HEK293 (cell line): ENCODE measurements at regions of chr2 and their contacts with region 1.

Region 1: DNA sequence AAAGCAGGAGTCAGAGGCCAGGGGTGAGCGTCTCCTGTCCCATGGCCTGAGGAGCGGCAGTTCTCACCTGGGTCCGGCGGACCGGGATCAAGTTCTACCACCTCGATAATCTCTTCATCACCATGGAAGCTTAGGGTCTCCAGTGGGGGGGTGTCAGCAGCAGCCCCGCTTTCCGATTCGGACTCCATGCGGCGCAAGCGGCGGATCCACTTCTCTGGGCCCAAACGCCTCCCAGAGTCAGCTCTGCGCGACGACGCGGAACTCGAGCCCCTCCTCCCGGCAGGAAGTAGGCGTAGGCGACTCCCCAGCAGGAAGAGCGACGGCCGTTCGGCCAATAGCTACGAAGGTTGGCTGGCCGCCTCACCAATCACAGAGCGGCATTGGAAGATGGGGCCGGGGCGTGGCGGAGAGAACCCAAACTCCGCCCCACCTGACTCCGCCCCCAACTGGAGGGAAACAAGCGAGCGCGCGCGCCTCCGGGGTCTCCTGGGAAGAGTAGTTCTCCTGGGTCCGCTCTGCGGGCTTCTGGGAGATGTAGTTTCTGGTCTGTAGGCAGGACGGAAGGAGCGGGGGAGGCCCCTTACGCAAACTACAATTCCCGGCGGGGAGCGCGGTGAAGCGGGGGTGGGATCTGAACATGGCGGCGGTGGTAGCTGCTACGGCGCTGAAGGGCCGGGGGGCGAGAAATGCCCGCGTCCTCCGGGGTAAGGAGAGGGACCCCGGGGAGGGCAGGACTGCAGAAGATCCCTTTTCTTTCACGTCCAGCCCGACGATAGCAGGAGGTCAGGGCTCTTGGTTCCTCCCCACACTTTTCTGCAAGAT is at the starts of genes AAMP and PNKD:
- H3K4me3 ChIP-seq: peak within 1 kb of the TSS; percentile 76
- H3K27ac ChIP-seq: peak within 1 kb of the TSS; percentile 72
- H3K4me1 ChIP-seq: peaks cover 3% of the 10 kb centered on the region; the same call in 1 of the 2 replicates
- CTCF ChIP-seq: peak; percentile 76

Region 2: GRCh38 chr2:218234521-218234920 is 35.6 kb before region 1 on chr2:
- CTCF ChIA-PET with region 1: no interaction called
- POLR2A ChIA-PET with region 1: no interaction called
- H3K4me3 ChIP-seq: no peak overlapping the region
- H3K27ac ChIP-seq: no peak overlapping the region
- H3K4me1 ChIP-seq: 0 out of 2 replicates have a peak, but pooled peaks cover 2% of the 10 kb centered on the region
- CTCF ChIP-seq: no peak

Region 3: GRCh38 chr2:218286570-218287459 is 16.7 kb after region 1 on chr2:
- CTCF ChIA-PET with region 1: interaction called, 89 read pairs
- POLR2A ChIA-PET with region 1: interaction called, 29 read pairs
- H3K4me3 ChIP-seq: peak overlapping the region; percentile 25
- H3K27ac ChIP-seq: peak overlapping the region; percentile 52
- H3K4me1 ChIP-seq: no peaks in the 10 kb centered on the region
- CTCF ChIP-seq: no peak

Region 4: DNA sequence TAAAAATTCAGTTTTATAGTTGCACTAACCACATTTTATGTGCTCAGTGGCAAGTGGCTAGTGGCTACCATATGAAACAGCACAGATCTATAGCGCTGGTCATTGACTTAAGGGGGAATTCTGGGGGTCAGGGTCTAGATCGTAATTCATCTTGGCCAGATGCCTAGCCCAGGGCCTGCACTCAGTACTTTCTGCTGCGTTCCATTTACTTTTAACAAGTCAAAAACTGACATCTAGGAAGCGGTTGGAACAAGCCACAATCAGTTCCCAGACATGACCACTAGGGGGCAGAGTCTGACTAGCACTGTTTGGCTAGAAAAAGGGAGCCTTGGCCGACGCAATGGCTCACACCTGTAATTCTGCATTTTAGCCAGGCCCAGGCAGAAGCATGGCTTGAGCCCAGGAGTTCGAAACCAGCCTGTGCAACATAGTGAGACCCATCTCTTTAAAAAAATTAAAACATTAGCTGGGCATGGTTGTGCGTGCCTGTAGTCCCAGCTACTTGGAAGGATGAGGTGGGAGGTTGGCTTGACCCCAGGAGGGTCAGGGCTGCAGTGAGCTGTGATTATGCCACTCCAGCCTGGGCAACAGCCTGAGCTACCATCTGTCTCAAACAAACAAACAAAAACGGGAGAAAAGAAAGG is 31.2 kb after region 1 on chr2:
- CTCF ChIA-PET with region 1: interaction called, 89 read pairs
- POLR2A ChIA-PET with region 1: no interaction called
- H3K4me3 ChIP-seq: no peak overlapping the region
- H3K27ac ChIP-seq: no peak overlapping the region
- H3K4me1 ChIP-seq: no peaks in the 10 kb centered on the region; the same call in 1 of the 2 replicates
- CTCF ChIP-seq: peak; percentile 94

Region 5: GRCh38 chr2:218343591-218343990 is 73.5 kb after region 1 on chr2:
- CTCF ChIA-PET with region 1: no interaction called
- POLR2A ChIA-PET with region 1: no interaction called
- H3K4me3 ChIP-seq: no peak overlapping the region
- H3K27ac ChIP-seq: no peak overlapping the region
- H3K4me1 ChIP-seq: peaks cover 6% of the 10 kb centered on the region
- CTCF ChIP-seq: no peak

Region 6: DNA sequence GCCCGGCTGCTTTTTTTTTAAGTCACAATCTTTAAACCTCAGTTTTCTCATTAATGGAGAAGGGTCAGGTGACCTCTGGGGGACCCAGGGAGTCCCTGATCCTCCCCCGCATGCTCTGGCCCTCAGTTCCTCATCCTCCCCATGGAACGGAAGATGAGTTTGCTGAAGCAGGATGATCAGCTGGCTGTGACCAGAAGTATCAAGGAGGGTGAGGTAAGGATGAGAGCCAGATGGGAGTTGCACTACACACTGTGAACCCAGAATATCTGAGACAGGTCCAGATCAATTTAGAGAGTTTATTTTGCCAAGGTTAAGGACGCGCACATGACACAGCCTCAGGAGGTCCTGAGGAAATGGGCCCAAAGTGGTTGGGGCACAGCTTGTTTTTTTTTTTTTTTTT is 90.3 kb after region 1 on chr2:
- CTCF ChIA-PET with region 1: interaction called, 10 read pairs
- POLR2A ChIA-PET with region 1: no interaction called
- H3K4me3 ChIP-seq: no peak overlapping the region
- H3K27ac ChIP-seq: no peak overlapping the region
- H3K4me1 ChIP-seq: no peaks in the 10 kb centered on the region
- CTCF ChIP-seq: no peak